A673 (cell line): ENCODE measurements at regions of chr14 and their contacts with region 1.

Region 1: GRCh38 chr14:74612350-74613021 is 449 bp upstream of the LTBP2 start:
- DNase-seq: peak; percentile 84
- H3K4me3 ChIP-seq: peak overlapping the region; percentile 46
- H3K27ac ChIP-seq: no peak overlapping the region
- H3K4me1 ChIP-seq: peaks cover 17% of the 10 kb centered on the region
- H3K27me3 ChIP-seq: peaks cover 27% of the 10 kb centered on the region
- CTCF ChIP-seq: peak; percentile 44

Region 2: GRCh38 chr14:74586681-74587362 is 25.7 kb before region 1 on chr14:
- CTCF ChIA-PET with region 1: no interaction called
- POLR2A ChIA-PET with region 1: interaction called, 13 read pairs
- intact Hi-C with region 1: no loop called
- DNase-seq: no peak
- H3K4me3 ChIP-seq: no peak overlapping the region
- H3K27ac ChIP-seq: no peak overlapping the region
- H3K4me1 ChIP-seq: no peaks in the 10 kb centered on the region
- H3K27me3 ChIP-seq: no peaks in the 10 kb centered on the region
- CTCF ChIP-seq: no peak

Region 3: DNA sequence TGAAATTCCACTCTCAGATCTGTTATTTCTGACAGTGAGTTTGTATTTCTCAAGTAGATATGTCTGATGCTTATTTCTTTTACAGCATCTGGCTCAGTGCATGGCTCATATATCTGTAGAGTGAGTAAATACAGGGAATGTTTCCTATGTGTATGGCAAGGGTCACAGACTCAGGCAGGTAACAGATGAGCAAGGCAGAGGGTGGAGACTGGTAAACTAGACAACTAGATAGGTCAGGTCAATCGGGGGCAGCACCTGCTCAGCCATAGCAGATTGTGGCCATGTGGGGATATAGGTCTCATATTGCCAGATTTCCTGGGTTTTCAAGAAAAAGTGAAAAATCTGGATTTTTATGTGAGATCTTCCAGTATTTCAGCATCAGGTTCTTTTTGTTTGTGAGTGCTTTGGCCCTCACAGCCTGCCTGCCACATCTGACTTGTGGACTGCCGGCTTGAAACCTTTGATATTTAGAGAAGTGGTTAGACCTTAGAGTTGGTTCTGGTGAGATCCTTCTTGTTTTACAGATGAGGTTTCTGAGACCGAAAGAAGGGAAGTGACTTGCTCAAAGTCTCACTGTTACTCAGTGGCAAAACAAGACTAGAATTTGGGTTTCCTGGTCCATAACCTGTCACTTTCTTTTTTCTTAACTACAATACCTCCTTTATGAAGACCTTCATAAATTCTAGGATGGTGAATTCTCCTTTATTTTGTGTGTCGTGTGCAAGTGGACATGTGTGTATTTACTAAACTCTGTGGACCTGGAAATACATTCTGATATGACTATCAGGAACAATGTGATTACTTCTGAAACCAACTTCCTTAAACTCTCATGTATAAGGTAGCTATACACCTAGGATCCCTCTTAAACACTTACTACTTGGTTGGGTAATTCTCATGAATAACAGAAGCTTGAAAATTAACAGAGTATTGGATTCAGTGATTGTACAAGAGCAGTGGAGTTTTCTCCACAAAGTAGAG is 229.0 kb after region 1 on chr14:
- CTCF ChIA-PET with region 1: no interaction called
- POLR2A ChIA-PET with region 1: no interaction called
- intact Hi-C with region 1: loop called (anchors 10 kb)
- DNase-seq: no peak
- H3K4me3 ChIP-seq: no peak overlapping the region
- H3K27ac ChIP-seq: no peak overlapping the region
- H3K4me1 ChIP-seq: no peaks in the 10 kb centered on the region
- H3K27me3 ChIP-seq: no peaks in the 10 kb centered on the region
- CTCF ChIP-seq: no peak